ENCODE measurements at regions of chr14 and their contacts with region 1.

Region 1: DNA sequence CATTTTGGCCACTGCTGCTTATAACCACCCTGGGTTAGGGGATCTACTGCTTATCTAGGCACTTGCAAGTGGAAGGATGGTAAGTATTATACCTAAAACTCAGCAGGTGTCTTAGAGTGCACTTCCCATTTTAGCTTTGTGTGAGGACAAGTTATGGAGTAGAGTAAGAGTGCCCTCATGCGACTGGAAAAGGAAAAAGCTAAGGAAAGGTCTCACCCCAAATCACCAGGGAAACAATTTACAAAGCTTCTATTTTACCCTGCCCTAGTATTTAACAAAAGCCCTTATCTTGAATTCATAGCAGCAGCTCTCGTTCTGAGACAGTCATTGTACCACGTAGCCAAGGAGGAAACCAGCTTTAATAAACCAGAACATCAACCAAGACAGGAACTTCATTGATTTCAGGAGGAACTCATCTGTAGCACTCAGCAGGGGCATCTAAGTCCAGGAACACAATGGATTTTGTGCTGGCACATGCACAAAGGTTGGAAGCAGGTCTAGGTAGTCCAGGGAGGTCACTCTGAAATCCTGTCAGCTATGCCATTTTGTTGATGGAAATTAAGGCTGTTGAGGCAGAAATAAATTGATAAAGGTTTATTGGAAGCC is 2.9 kb downstream of the RDH12 start:
- DNase-seq: peak; percentile 67
- CTCF ChIP-seq: peak; percentile 72

Region 2: GRCh38 chr14:67526676-67527459 is 177.7 kb before region 1 on chr14:
- CTCF ChIA-PET with region 1: interaction called, 31 read pairs
- POLR2A ChIA-PET with region 1: no interaction called
- DNase-seq: peak; percentile 53
- CTCF ChIP-seq: peak; percentile 53

Region 3: DNA sequence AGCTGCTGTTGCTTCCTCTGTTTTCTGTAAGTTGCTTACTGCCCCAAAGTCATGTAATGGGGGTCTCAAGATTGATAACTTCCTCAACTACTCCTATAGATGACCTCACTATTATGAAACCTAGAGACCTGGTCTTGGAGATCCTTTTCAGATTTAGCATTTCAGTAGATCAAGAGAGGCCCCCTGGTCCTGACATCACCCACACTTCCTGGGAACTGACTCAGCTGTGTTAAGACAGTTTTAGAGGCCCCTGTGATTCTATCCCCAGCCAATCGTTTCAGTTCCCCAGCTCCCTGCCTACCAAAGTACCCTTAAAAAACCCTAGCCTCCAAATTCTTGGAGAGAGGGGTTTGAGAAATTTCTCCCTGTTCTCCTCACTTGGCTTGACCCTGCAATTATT is 94.1 kb before region 1 on chr14:
- CTCF ChIA-PET with region 1: interaction called, 25 read pairs
- POLR2A ChIA-PET with region 1: no interaction called
- DNase-seq: no peak
- CTCF ChIP-seq: no peak

Region 4: GRCh38 chr14:67644428-67644827 is 60.2 kb before region 1 on chr14:
- CTCF ChIA-PET with region 1: interaction called, 10 read pairs
- POLR2A ChIA-PET with region 1: no interaction called
- DNase-seq: no peak
- CTCF ChIP-seq: no peak

Region 5: DNA sequence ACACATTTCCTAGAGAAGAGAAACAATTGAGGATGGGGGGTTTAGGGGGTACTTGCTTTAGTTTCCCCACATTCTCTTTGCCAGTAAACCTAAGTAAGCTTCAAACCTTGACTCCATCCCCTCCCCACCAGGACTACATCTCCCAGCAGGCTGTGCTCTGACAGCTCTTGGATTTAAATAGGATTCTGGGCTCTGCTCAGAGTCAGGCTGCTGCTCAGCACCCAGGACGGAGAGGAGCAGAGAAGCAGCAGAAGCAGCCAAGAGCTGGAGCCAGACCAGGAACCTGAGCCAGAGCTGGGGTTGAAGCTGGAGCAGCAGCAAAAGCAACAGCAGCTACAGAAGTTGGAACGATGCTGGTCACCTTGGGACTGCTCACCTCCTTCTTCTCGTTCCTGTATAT is 17.7 kb after region 1 on chr14:
- CTCF ChIA-PET with region 1: interaction called, 15 read pairs
- POLR2A ChIA-PET with region 1: no interaction called
- DNase-seq: no peak
- CTCF ChIP-seq: no peak

Measured in GM10248 (cell line).